PC-9 (cell line): ENCODE measurements at regions of chr1 and their contacts with region 1.

Region 1: DNA sequence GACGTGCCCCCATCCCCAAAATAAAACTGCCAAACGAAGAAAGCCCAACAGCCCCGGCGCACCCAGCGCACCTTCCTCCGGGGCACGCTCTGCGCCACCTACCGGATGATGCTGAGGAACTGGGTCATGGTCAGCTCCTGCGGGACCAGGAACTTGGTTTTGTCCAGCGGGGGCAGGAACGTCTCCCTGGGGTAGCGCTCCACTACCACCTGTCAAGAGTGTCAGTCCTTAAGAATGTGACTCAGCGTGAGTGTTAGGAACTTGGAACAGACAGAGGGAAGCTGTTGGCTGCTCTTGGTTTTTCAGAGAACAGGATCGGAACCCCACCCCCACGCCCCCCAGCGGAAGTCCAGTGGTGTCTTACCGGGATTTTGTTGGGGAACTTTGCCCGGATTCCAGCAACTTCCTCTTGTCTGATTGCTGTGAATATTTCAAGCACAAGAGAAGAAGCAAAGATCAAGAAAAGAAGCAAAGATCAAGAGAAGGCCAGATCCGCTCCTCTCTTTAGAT is 431 bp downstream of the MAP1LC3C start:
- DNase-seq: peak; percentile 58 to 80
- H3K4me3 ChIP-seq: no peak overlapping the region
- H3K27ac ChIP-seq: no peak overlapping the region
- H3K4me1 ChIP-seq: no peaks in the 10 kb centered on the region
- H3K27me3 ChIP-seq: no peaks in the 10 kb centered on the region
- CTCF ChIP-seq: no peak; the same call in 1 of the 2 replicates

Region 2: GRCh38 chr1:241519308-241520079 is 479.0 kb before region 1 on chr1 and contains the start of gene FH:
- CTCF ChIA-PET with region 1: no interaction called
- POLR2A ChIA-PET with region 1: no interaction called
- intact Hi-C with region 1: loop called (anchors 10 kb)
- DNase-seq: peak; percentile 94 to 96
- H3K4me3 ChIP-seq: peak within 1 kb of the TSS; percentile 90
- H3K27ac ChIP-seq: peak within 1 kb of the TSS; percentile 39; the same call in 1 of the 2 replicates
- H3K4me1 ChIP-seq: peaks cover 26% of the 10 kb centered on the region
- H3K27me3 ChIP-seq: no peaks in the 10 kb centered on the region
- CTCF ChIP-seq: no peak
- total RNA-seq, gene FH: 56.1 and 88.3 TPM in 2 replicates

Region 3: GRCh38 chr1:242132121-242132817 is 133.8 kb after region 1 on chr1:
- CTCF ChIA-PET with region 1: no interaction called
- POLR2A ChIA-PET with region 1: no interaction called
- intact Hi-C with region 1: no loop called
- DNase-seq: no peak
- H3K4me3 ChIP-seq: no peak overlapping the region
- H3K27ac ChIP-seq: no peak overlapping the region
- H3K4me1 ChIP-seq: no peaks in the 10 kb centered on the region
- H3K27me3 ChIP-seq: peaks cover 5% of the 10 kb centered on the region; the same call in 1 of the 2 replicates
- CTCF ChIP-seq: no peak